ENCODE measurements at regions of chr2 and their contacts with region 1.

Region 1: GRCh38 chr2:152025678-152026287 is 73.1 kb downstream of the CACNB4 start:
- DNase-seq: peak; percentile 43 to 93
- H3K4me3 ChIP-seq: peak overlapping the region in 3 of 4 experiments; percentile 1 to 56 (median 8); a peak in 4 of 8 replicates
- H3K27ac ChIP-seq: no peak overlapping the region
- H3K4me1 ChIP-seq: no peaks in the 10 kb centered on the region
- H3K27me3 ChIP-seq: peaks cover 0 to 2% (median under 1%) of the 10 kb centered on the region in 4 experiments; a peak in 1 of 7 replicates
- CTCF ChIP-seq: peak; percentile 96 to 100 (median 97)
- EP300 ChIP-seq: no peak
- POLR2A ChIP-seq: no peak
- RAD21 ChIP-seq: peak; percentile 71 to 76

Region 2: GRCh38 chr2:151891566-151892194 is 134.1 kb before region 1 on chr2:
- CTCF ChIA-PET with region 1: interaction called, 10 read pairs
- POLR2A ChIA-PET with region 1: no interaction called
- DNase-seq: no peak
- H3K4me3 ChIP-seq: no peak overlapping the region
- H3K27ac ChIP-seq: no peak overlapping the region
- H3K4me1 ChIP-seq: no peaks in the 10 kb centered on the region
- H3K27me3 ChIP-seq: no peaks in the 10 kb centered on the region
- CTCF ChIP-seq: peak in 1 of 3 experiments; percentile 25; a peak in 1 of 4 replicates
- EP300 ChIP-seq: no peak
- POLR2A ChIP-seq: no peak
- RAD21 ChIP-seq: peak; percentile 38 to 50

Region 3: DNA sequence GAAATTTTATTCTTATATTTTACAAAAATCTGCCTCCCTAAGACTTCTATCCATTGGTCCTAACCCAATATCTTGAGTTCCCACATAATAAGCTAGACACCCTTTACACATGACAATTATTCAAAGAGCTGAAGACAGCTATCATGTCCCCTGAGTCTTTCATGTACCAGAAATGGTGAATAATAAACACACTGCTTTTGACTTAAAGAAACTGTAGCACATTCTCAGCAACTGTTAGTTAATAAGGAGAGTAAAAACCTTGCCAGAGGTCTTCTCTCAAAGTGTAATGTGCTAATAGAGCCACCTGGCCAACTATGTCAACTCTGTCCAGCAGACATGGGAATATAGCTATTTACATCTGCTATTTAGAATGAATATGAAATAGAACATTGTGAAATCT is 87.8 kb before region 1 on chr2:
- CTCF ChIA-PET with region 1: no interaction called
- POLR2A ChIA-PET with region 1: no interaction called
- DNase-seq: no peak
- H3K4me3 ChIP-seq: no peak overlapping the region
- H3K27ac ChIP-seq: no peak overlapping the region
- H3K4me1 ChIP-seq: no peaks in the 10 kb centered on the region; a peak in 1 of 7 replicates
- H3K27me3 ChIP-seq: peaks cover 0 to 1% (median 0%) of the 10 kb centered on the region in 4 experiments; a peak in 1 of 7 replicates
- CTCF ChIP-seq: no peak
- EP300 ChIP-seq: no peak
- POLR2A ChIP-seq: no peak
- RAD21 ChIP-seq: no peak

Region 4: DNA sequence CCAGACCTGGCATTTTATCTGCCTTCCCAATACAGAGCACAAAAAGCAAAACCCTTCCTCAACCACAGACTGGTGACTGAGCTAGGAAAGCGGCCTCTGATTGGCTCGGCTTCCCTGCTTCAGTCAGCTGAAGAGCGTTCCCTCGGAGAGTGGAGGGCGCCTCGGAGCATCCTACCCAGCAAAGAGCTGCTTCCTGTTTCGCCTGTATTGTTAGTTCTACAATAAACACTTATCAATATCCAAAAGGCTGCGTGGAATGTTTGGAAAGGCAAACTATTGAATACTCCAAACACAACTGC is 51.9 kb before region 1 on chr2:
- CTCF ChIA-PET with region 1: interaction called, 16 read pairs
- POLR2A ChIA-PET with region 1: no interaction called
- DNase-seq: peak; percentile 7 to 55
- H3K4me3 ChIP-seq: no peak overlapping the region
- H3K27ac ChIP-seq: no peak overlapping the region
- H3K4me1 ChIP-seq: peaks cover 0 to 5% (median 3%) of the 10 kb centered on the region in 4 experiments; a peak in 3 of 7 replicates
- H3K27me3 ChIP-seq: no peaks in the 10 kb centered on the region
- CTCF ChIP-seq: no peak
- EP300 ChIP-seq: no peak
- POLR2A ChIP-seq: no peak
- RAD21 ChIP-seq: no peak

Region 5: DNA sequence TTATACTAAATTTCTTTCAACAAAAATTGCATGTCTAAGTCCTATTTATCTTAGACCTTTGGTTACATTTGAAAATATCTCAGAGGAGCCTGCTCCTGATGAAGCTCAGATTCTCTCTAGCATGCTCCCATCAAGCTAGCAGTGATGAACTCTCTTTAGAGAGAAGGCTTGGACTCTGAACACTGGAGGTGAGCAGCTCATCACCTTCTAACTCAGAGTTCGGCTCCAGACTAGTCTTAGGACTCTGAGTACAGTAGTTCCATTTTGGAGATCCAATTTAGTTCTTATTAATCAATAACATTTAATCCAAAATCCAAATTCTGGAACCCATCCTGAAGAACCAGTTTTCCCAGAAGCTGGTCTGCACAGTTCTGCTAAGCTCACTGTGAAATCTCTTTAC is 34.8 kb before region 1 on chr2:
- CTCF ChIA-PET with region 1: interaction called, 17 read pairs
- POLR2A ChIA-PET with region 1: no interaction called
- DNase-seq: no peak
- H3K4me3 ChIP-seq: no peak overlapping the region
- H3K27ac ChIP-seq: no peak overlapping the region
- H3K4me1 ChIP-seq: no peaks in the 10 kb centered on the region
- H3K27me3 ChIP-seq: no peaks in the 10 kb centered on the region
- CTCF ChIP-seq: no peak
- EP300 ChIP-seq: no peak
- POLR2A ChIP-seq: no peak
- RAD21 ChIP-seq: no peak

Region 6: GRCh38 chr2:152012697-152013096 is 13.1 kb before region 1 on chr2:
- CTCF ChIA-PET with region 1: interaction called, 101 read pairs
- POLR2A ChIA-PET with region 1: interaction called, 3 read pairs
- DNase-seq: no peak
- H3K4me3 ChIP-seq: no peak overlapping the region
- H3K27ac ChIP-seq: no peak overlapping the region
- H3K4me1 ChIP-seq: no peaks in the 10 kb centered on the region
- H3K27me3 ChIP-seq: no peaks in the 10 kb centered on the region
- CTCF ChIP-seq: no peak
- EP300 ChIP-seq: no peak
- POLR2A ChIP-seq: no peak
- RAD21 ChIP-seq: no peak

Region 7: GRCh38 chr2:152089238-152089637 is 63.5 kb after region 1 on chr2:
- CTCF ChIA-PET with region 1: interaction called, 11 read pairs
- POLR2A ChIA-PET with region 1: no interaction called
- DNase-seq: no peak
- H3K4me3 ChIP-seq: no peak overlapping the region
- H3K27ac ChIP-seq: no peak overlapping the region
- H3K4me1 ChIP-seq: no peaks in the 10 kb centered on the region
- H3K27me3 ChIP-seq: no peaks in the 10 kb centered on the region; a peak in 1 of 7 replicates
- CTCF ChIP-seq: no peak
- EP300 ChIP-seq: no peak
- POLR2A ChIP-seq: no peak
- RAD21 ChIP-seq: no peak

Measured in H1 (cell line).